Right ventricle myocardium superior (tissue), 1 donor: ENCODE measurements at regions of chr1 and their contacts with region 1.

Region 1: GRCh38 chr1:5745776-5746610 is 246.2 kb downstream of the NPHP4 start:
- DNase-seq: peak; percentile 71
- ATAC-seq: peak; percentile 91

Region 2: DNA sequence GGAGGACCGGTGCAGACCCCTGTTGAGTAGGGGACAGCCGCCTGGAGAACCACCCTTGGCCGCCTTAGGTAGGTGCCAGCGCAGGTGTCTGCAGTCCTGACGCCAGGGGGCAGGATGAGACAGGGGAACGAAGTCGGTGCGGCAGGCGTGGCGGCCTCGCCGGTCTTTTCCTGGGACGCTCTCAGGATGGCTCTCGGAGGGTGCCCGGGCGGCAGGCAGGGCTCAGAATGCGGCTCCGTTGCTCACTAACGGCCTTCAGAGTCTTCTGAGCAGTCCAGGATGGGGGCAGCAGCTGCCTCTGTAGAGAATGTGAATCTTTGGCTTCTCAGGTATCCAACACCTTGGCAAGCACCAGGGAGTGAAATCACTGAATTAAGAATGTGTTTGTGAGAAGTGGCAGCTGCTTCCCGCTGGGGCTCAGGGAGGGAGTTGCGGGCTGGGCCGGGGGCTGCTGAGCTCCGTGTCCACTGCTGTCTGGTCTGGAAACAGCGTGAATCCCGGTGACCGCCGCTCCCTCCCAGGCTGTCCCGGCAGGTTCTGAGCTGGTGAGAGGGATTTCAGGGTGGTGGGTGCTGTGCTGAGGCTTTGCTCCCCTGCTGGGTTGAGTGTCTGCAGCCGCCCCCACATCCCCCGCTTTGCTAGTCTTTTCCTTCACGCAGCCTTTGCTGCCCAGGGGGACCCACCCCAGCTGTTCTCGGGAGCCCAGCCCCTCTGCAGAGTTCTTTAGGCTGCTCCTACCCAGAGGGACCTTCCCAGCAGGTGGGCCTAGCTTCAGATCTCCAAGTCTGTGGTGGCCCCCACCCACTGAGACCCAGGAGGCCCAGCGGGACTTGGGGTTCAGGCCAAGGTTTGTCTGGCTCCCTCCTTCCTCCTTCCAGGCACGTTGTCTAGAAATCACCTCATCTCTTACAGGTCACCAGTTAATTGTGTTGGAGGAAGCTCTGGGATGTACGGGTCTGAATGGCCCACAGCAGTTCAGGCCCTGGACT is 1834.8 kb before region 1 on chr1:
- intact Hi-C with region 1: loop called (anchors 10 kb)
- DNase-seq: peak; percentile 74
- ATAC-seq: peak; percentile 83

Region 3: GRCh38 chr1:5514519-5515183 is 231.3 kb before region 1 on chr1:
- intact Hi-C with region 1: loop called (anchors 5 kb)
- DNase-seq: peak; percentile 80
- ATAC-seq: peak; percentile 85

Region 4: DNA sequence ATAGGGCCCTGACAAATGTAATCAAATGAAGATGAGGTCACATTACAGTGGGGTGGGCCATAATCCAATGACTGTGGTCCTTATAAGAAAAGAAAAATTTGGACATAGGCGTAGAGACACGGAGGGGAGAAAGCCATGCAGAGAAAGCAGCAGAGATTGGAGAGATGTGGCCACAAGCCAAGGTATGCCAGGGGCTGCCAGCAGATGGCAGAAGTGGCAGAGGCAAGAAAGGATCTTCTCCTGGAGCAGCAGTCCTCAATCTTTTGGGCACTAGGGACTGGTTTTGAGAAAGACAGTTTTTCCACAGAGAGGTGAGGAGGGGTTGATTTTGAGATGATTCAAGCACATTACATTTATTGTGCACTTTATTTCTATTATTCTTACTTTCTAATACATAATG is 108.8 kb before region 1 on chr1:
- intact Hi-C with region 1: loop called (anchors 5 kb)
- DNase-seq: no peak
- ATAC-seq: no peak

Region 5: GRCh38 chr1:5667513-5668325 is 78.3 kb before region 1 on chr1:
- intact Hi-C with region 1: no loop called
- DNase-seq: peak; percentile 53
- ATAC-seq: no peak

Region 6: GRCh38 chr1:5704561-5705514 is 41.2 kb before region 1 on chr1:
- intact Hi-C with region 1: no loop called
- DNase-seq: no peak
- ATAC-seq: no peak